Activated CD4-positive, alpha-beta T cell treated with anti-CD3 and anti-CD28 coated beads, Interleukin-2, amount 10 ng/mL, durations not matched to agents 24 days and 14 days (primary cell): ENCODE measurements at regions of chr16 and their contacts with region 1.

Region 1: GRCh38 chr16:65121870-65122723 is at the start of gene CDH11:
- DNase-seq: no peak
- H3K4me3 Mint-ChIP-seq: no peak within 1 kb of the TSS
- H3K27ac Mint-ChIP-seq: no peak within 1 kb of the TSS
- H3K4me1 Mint-ChIP-seq: no peaks in the 10 kb centered on the region
- H3K27me3 Mint-ChIP-seq: peaks cover 40% of the 10 kb centered on the region
- total RNA-seq, gene CDH11: not detected in 2 replicates

Region 2: GRCh38 chr16:64159976-64160375 is 962.1 kb before region 1 on chr16:
- intact Hi-C with region 1: loop called (anchors 10 kb)
- DNase-seq: no peak
- H3K4me3 Mint-ChIP-seq: no peak overlapping the region
- H3K27ac Mint-ChIP-seq: no peak overlapping the region
- H3K4me1 Mint-ChIP-seq: no peaks in the 10 kb centered on the region
- H3K27me3 Mint-ChIP-seq: no peaks in the 10 kb centered on the region

Region 3: DNA sequence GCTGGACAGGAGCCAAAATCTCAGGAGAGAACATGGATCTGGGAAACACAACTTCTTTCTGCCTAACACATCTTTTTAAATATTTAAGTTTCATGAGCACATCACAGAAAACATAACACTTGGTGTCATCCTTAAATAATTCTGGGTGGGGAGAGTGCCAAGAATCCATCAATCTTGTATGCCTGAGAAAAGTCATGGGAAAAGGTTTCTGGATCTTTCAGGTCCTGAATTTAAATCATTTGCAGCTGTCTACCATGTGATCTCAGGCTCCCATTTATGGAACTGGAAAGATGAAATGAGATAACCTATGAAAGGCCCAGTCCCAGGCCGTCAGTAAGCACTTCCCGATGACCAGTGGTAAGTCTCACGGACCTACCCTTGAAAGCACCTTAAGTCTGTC is 15.3 kb before region 1 on chr16:
- intact Hi-C with region 1: no loop called
- DNase-seq: no peak
- H3K4me3 Mint-ChIP-seq: no peak overlapping the region
- H3K27ac Mint-ChIP-seq: no peak overlapping the region
- H3K4me1 Mint-ChIP-seq: no peaks in the 10 kb centered on the region
- H3K27me3 Mint-ChIP-seq: no peaks in the 10 kb centered on the region

Region 4: GRCh38 chr16:65384441-65384840 is 262.3 kb after region 1 on chr16:
- intact Hi-C with region 1: no loop called
- DNase-seq: no peak
- H3K4me3 Mint-ChIP-seq: no peak overlapping the region
- H3K27ac Mint-ChIP-seq: no peak overlapping the region
- H3K4me1 Mint-ChIP-seq: no peaks in the 10 kb centered on the region
- H3K27me3 Mint-ChIP-seq: no peaks in the 10 kb centered on the region

Region 5: GRCh38 chr16:66270333-66270927 is 1148.3 kb after region 1 on chr16:
- intact Hi-C with region 1: loop called (anchors 10 kb)
- DNase-seq: peak; percentile 90
- H3K4me3 Mint-ChIP-seq: no peak overlapping the region
- H3K27ac Mint-ChIP-seq: no peak overlapping the region
- H3K4me1 Mint-ChIP-seq: peaks cover 7% of the 10 kb centered on the region
- H3K27me3 Mint-ChIP-seq: peaks cover 36% of the 10 kb centered on the region